ENCODE measurements at regions of chr22 and their contacts with region 1.

Region 1: DNA sequence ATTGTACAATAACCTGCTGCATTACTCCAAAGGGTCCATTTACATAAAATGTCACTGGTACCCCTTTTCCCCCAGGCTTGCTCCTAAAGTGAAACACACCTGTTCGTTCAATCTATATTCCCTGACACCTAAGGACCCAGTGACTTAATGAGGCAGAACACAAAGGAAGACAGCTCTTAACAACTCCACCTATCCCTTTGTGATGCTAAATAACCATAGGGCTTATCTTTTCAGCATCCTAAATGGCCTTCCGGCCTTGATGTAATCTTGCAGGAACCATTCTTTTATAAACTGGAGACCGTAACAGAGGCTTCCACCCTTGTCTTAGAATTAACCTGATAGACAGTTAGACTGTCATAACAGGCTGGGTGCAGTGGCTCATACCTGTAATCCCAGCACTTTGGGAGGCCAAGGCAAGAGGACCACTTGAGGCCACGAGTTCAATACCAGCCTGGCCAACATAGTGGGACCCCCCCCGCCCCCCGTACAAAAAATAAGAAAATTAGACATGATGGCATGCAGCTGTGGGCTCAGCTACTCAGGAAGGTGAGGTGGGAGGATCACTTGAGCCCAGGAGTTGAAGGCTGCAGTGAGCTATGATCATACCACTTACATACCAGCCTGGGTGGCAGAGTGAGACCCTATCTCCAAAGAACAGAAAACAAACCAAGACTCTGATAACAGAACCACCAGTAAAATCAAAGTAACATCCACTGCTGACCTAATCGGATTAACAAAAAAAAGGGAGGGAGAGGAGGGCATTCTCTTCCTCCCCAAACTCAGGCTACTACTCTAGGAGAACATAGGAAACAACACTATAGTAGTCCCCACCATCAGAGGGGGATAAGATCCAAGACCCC is 5.1 kb downstream of the CHEK2 start:
- DNase-seq: no peak
- ATAC-seq: no peak
- H3K4me3 ChIP-seq: no peak overlapping the region
- H3K27ac ChIP-seq: no peak overlapping the region
- H3K4me1 ChIP-seq: peaks cover 5% of the 10 kb centered on the region; the same call in 1 of the 2 replicates
- H3K27me3 ChIP-seq: no peaks in the 10 kb centered on the region
- CTCF ChIP-seq: no peak

Region 2: GRCh38 chr22:28674121-28674563 is 62.4 kb before region 1 on chr22:
- CTCF ChIA-PET with region 1: no interaction called
- POLR2A ChIA-PET with region 1: interaction called, 12 read pairs
- in situ Hi-C with region 1: no loop called
- intact Hi-C with region 1: no loop called
- DNase-seq: no peak
- ATAC-seq: no peak
- H3K4me3 ChIP-seq: no peak overlapping the region
- H3K27ac ChIP-seq: no peak overlapping the region
- H3K4me1 ChIP-seq: no peaks in the 10 kb centered on the region
- H3K27me3 ChIP-seq: no peaks in the 10 kb centered on the region
- CTCF ChIP-seq: no peak

Region 3: GRCh38 chr22:29143941-29144785 is 407.6 kb after region 1 on chr22:
- CTCF ChIA-PET with region 1: no interaction called
- POLR2A ChIA-PET with region 1: no interaction called
- in situ Hi-C with region 1: no loop called
- intact Hi-C with region 1: no loop called
- DNase-seq: no peak
- ATAC-seq: no peak
- H3K4me3 ChIP-seq: no peak overlapping the region
- H3K27ac ChIP-seq: no peak overlapping the region
- H3K4me1 ChIP-seq: no peaks in the 10 kb centered on the region
- H3K27me3 ChIP-seq: no peaks in the 10 kb centered on the region
- CTCF ChIP-seq: no peak

Region 4: GRCh38 chr22:29883045-29883774 is 1146.7 kb after region 1 on chr22 and contains the start of gene MTMR3:
- CTCF ChIA-PET with region 1: no interaction called
- POLR2A ChIA-PET with region 1: no interaction called
- in situ Hi-C with region 1: no loop called
- intact Hi-C with region 1: no loop called
- DNase-seq: peak; percentile 33
- ATAC-seq: peak; percentile 95
- H3K4me3 ChIP-seq: peak within 1 kb of the TSS; percentile 73 to 77
- H3K27ac ChIP-seq: peak within 1 kb of the TSS; percentile 73
- H3K4me1 ChIP-seq: peaks cover 11% of the 10 kb centered on the region
- H3K27me3 ChIP-seq: no peaks in the 10 kb centered on the region
- CTCF ChIP-seq: peak; percentile 51
- total RNA-seq, gene MTMR3: 26.8 TPM

Measured in Panc1 (cell line).